ENCODE measurements at regions of chr6 and their contacts with region 1.

Region 1: DNA sequence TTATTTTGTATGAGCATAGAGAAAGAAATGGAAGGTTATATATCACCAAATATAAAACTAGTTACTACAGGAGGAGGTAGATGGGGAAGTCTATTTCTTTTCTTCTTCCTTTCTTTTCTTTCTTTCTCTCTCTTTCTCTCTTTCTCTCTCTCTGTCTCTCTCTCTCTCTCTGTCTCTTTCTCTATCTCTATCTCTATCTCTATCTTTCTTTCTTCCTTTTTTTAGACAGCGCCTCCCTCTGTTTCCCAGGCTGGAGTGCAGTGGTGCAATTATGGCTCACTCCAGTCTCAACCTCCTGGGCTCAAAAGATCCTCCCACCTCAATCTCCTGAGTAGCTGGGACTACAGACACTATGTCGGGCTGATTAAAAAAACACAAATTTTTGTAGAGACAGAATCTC is 10.2 kb upstream of the SGK1 start:
- DNase-seq: no peak
- ATAC-seq: no peak
- H3K4me3 ChIP-seq: no peak overlapping the region
- H3K27ac ChIP-seq: no peak overlapping the region
- H3K4me1 ChIP-seq: no peaks in the 10 kb centered on the region
- CTCF ChIP-seq: no peak
- EP300 ChIP-seq: no peak
- POLR2A ChIP-seq: no peak
- RAD21 ChIP-seq: no peak

Region 2: GRCh38 chr6:134190883-134191282 is 137.3 kb before region 1 on chr6:
- CTCF ChIA-PET with region 1: interaction called, 4 read pairs
- POLR2A ChIA-PET with region 1: interaction called, 10 read pairs
- DNase-seq: no peak
- ATAC-seq: no peak
- H3K4me3 ChIP-seq: no peak overlapping the region
- H3K27ac ChIP-seq: no peak overlapping the region
- H3K4me1 ChIP-seq: peaks cover 18% of the 10 kb centered on the region; the same call in 2 of the 3 replicates
- CTCF ChIP-seq: no peak
- EP300 ChIP-seq: no peak
- POLR2A ChIP-seq: no peak
- RAD21 ChIP-seq: no peak

Measured in A549 (cell line).